ENCODE measurements at regions of chr19 and their contacts with region 1.

Region 1: DNA sequence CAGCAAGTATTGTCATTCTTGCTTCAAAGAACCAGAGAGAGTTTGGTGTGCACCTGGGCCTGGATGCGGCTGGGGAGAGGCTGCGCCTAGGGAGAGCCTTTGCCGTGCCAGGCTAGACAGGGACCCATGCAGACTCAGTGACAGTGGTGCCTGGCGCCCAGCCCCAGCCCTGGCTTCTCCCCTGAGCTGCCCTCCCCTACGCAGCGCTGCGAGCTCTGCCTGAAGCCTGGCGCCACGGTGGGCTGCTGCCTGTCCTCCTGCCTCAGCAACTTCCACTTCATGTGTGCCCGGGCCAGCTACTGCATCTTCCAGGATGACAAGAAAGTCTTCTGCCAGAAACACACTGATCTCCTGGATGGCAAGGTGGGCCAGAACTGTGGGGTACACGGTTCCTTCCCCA is 12.0 kb downstream of the KMT2B start:
- DNase-seq: no peak
- ATAC-seq: no peak
- H3K4me3 ChIP-seq: no peak overlapping the region
- H3K27ac ChIP-seq: no peak overlapping the region
- H3K4me1 ChIP-seq: no peaks in the 10 kb centered on the region
- H3K27me3 ChIP-seq: no peaks in the 10 kb centered on the region
- CTCF ChIP-seq: no peak

Region 2: DNA sequence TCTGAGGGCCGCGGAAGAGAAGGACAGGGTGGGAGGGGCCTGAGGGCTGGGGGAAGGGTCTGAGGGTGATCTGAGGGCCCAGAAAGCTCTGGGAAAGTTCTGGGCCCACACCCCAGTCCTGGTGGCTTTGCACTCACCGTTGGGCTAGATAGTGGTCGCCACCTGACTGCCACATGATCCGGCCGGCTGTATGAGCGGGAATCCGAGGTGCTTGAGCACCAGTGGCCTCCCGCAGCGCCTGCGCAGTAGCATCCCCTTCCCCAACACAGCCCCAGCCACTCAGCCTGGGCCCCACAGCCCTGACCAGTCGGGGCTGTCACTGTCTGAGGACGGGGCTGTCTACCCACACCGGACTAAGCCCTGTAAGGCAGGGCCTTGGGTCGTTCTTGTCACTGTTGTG is 67.9 kb after region 1 on chr19:
- intact Hi-C with region 1: loop called in 1 of 10 experiments (anchors 2 kb)
- DNase-seq: no peak
- ATAC-seq: no peak
- H3K4me3 ChIP-seq: peak overlapping the region in 1 of 10 donors; percentile 9
- H3K27ac ChIP-seq: no peak overlapping the region
- H3K4me1 ChIP-seq: peaks cover 0 to 4% (median 0%) of the 10 kb centered on the region in 9 donors
- H3K27me3 ChIP-seq: peaks cover 0 to 60% (median 48%) of the 10 kb centered on the region in 7 donors
- CTCF ChIP-seq: no peak

Measured in heart right ventricle (tissue), 16 donors.